Breast epithelium (tissue), 4 donors: ENCODE measurements at regions of chr2 and their contacts with region 1.

Region 1: DNA sequence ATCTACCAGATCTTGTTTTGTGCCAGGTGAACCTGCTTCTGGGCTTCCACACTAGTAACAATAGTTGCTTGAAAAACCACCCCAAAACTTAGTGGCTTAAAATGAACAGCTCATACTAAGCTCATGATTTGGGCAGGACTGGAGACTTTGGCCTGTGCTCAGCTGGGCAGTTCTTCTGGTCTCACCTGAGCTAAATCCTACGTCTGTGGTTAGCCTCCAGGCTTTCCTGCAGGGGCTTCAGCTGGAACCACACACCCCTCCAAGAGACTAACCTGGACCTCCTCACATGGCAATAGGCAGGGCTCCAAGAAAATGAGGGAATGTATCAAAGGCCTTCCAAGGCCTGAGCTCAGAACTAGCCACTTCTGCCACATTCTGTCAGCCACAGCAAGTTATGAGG is 144.1 kb downstream of the CD8B2 start:
- DNase-seq: no peak
- H3K4me3 ChIP-seq: no peak overlapping the region
- H3K27ac ChIP-seq: no peak overlapping the region
- H3K4me1 ChIP-seq: no peaks in the 10 kb centered on the region
- H3K27me3 ChIP-seq: peaks cover 0 to 4% of the 10 kb centered on the region in 2 donors
- CTCF ChIP-seq: no peak
- POLR2A ChIP-seq: no peak

Region 2: DNA sequence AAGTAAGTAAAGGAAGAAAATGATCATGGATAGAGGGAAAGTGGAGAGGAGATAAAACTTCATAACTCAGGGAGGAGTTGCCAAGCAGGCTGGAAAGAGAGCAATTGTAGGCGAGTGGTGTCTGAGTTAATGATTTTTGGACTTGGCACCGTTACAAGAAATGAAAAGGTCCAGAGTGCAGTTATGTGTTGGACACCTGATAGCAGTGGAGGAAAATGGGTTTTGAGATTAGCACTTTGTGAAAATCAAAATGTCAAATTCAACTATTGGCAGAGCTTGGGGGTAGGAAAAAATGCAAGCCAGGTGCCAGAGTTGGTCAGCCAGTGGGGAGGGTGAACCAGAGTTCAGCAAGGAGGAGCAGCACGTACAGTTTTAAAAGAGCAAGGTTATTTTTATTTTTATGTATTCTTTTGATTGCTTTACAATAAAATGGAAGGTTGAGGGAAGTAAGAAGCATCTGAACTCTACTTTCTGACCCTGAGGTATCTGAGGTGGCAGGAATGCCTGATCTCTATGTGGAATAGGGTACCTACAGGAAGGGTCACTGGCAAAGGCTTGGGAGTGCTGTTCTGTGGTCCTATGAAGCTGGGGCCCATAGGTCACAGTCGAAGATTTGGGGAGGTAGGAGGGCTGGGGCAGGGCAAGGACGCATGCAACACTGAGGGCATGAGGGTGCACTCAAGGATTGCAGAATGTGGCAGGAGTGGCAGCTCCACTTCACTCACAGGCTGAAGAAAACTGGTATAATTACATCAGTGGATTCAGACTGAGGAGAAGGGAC is 16.6 kb before region 1 on chr2:
- intact Hi-C with region 1: loop called (anchors 1 kb)
- DNase-seq: no peak
- H3K4me3 ChIP-seq: no peak overlapping the region
- H3K27ac ChIP-seq: no peak overlapping the region
- H3K4me1 ChIP-seq: no peaks in the 10 kb centered on the region
- H3K27me3 ChIP-seq: no peaks in the 10 kb centered on the region
- CTCF ChIP-seq: no peak
- POLR2A ChIP-seq: no peak